Mammary epithelial cell (primary cell): ENCODE measurements at regions of chr2 and their contacts with region 1.

Region 1: GRCh38 chr2:142030735-142031134 is 100.1 kb downstream of the LRP1B start:
- DNase-seq: no peak
- H3K4me3 ChIP-seq: no peak overlapping the region
- H3K27ac ChIP-seq: no peak overlapping the region
- H3K4me1 ChIP-seq: peaks cover 7% of the 10 kb centered on the region
- H3K27me3 ChIP-seq: no peaks in the 10 kb centered on the region
- CTCF ChIP-seq: no peak

Region 2: GRCh38 chr2:142041105-142041504 is 10.4 kb after region 1 on chr2:
- CTCF ChIA-PET with region 1: no interaction called
- dilution Hi-C with region 1: no loop called
- in situ Hi-C with region 1: no loop called
- intact Hi-C with region 1: no loop called
- DNase-seq: peak; percentile 55
- H3K4me3 ChIP-seq: no peak overlapping the region
- H3K27ac ChIP-seq: peak overlapping the region; percentile 20
- H3K4me1 ChIP-seq: peaks cover 41% of the 10 kb centered on the region
- H3K27me3 ChIP-seq: no peaks in the 10 kb centered on the region
- CTCF ChIP-seq: no peak

Region 3: GRCh38 chr2:142535311-142535710 is 504.6 kb after region 1 on chr2:
- CTCF ChIA-PET with region 1: interaction called, 16 read pairs
- dilution Hi-C with region 1: no loop called
- in situ Hi-C with region 1: no loop called
- intact Hi-C with region 1: no loop called
- DNase-seq: no peak
- H3K4me3 ChIP-seq: no peak overlapping the region
- H3K27ac ChIP-seq: no peak overlapping the region
- H3K4me1 ChIP-seq: no peaks in the 10 kb centered on the region
- H3K27me3 ChIP-seq: no peaks in the 10 kb centered on the region
- CTCF ChIP-seq: no peak